ENCODE measurements at regions of chr3 and their contacts with region 1.

Region 1: GRCh38 chr3:170098753-170099152 is 61.0 kb downstream of the GPR160 start:
- DNase-seq: no peak
- ATAC-seq: no peak
- H3K4me3 ChIP-seq: no peak overlapping the region
- H3K4me3 Mint-ChIP-seq: no peak overlapping the region
- H3K27ac ChIP-seq: no peak overlapping the region
- H3K27ac Mint-ChIP-seq: peak overlapping the region; percentile 68
- H3K4me1 ChIP-seq: no peaks in the 10 kb centered on the region
- H3K4me1 Mint-ChIP-seq: peaks cover 17% of the 10 kb centered on the region
- H3K27me3 ChIP-seq: no peaks in the 10 kb centered on the region
- H3K27me3 Mint-ChIP-seq: no peaks in the 10 kb centered on the region
- CTCF ChIP-seq: no peak

Region 2: GRCh38 chr3:169980055-169980454 is 118.7 kb before region 1 on chr3:
- CTCF ChIA-PET with region 1: no interaction called
- POLR2A ChIA-PET with region 1: no interaction called
- intact Hi-C with region 1: loop called (anchors 5 kb)
- DNase-seq: no peak
- ATAC-seq: no peak
- H3K4me3 ChIP-seq: no peak overlapping the region
- H3K4me3 Mint-ChIP-seq: no peak overlapping the region
- H3K27ac ChIP-seq: no peak overlapping the region
- H3K27ac Mint-ChIP-seq: no peak overlapping the region
- H3K4me1 ChIP-seq: no peaks in the 10 kb centered on the region
- H3K4me1 Mint-ChIP-seq: peaks cover 8% of the 10 kb centered on the region
- H3K27me3 ChIP-seq: no peaks in the 10 kb centered on the region
- H3K27me3 Mint-ChIP-seq: no peaks in the 10 kb centered on the region
- CTCF ChIP-seq: no peak

Region 3: GRCh38 chr3:169986613-169987012 is 112.1 kb before region 1 on chr3:
- CTCF ChIA-PET with region 1: no interaction called
- POLR2A ChIA-PET with region 1: no interaction called
- intact Hi-C with region 1: loop called (anchors 5 kb)
- DNase-seq: no peak
- ATAC-seq: no peak
- H3K4me3 ChIP-seq: no peak overlapping the region
- H3K4me3 Mint-ChIP-seq: no peak overlapping the region
- H3K27ac ChIP-seq: no peak overlapping the region
- H3K27ac Mint-ChIP-seq: no peak overlapping the region
- H3K4me1 ChIP-seq: no peaks in the 10 kb centered on the region
- H3K4me1 Mint-ChIP-seq: no peaks in the 10 kb centered on the region
- H3K27me3 ChIP-seq: no peaks in the 10 kb centered on the region
- H3K27me3 Mint-ChIP-seq: no peaks in the 10 kb centered on the region
- CTCF ChIP-seq: no peak

Region 4: DNA sequence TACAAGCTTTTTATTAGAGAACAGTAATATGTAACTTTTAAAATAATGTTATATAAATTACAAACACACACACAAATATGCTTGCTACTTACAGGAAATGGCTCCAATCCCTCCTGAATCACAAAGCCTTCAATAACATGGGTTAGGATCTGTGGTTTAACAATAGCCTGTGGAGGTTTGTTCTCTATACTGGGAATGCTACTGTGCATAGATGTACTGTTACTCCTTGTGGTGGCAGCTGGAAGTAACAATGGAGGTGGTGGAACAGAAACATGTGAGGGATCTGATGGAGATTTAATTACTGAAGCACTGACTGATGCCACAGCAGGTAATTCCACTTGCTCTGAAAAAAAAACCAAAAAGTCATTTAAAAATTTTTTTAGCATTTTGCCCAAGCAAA is 18.4 kb after region 1 on chr3:
- CTCF ChIA-PET with region 1: no interaction called
- POLR2A ChIA-PET with region 1: interaction called, 3 read pairs
- intact Hi-C with region 1: loop called in 1 of 2 experiments (anchors 2 kb)
- DNase-seq: no peak
- ATAC-seq: no peak
- H3K4me3 ChIP-seq: no peak overlapping the region
- H3K4me3 Mint-ChIP-seq: no peak overlapping the region
- H3K27ac ChIP-seq: no peak overlapping the region
- H3K27ac Mint-ChIP-seq: no peak overlapping the region
- H3K4me1 ChIP-seq: no peaks in the 10 kb centered on the region
- H3K4me1 Mint-ChIP-seq: peaks cover 2% of the 10 kb centered on the region
- H3K27me3 ChIP-seq: no peaks in the 10 kb centered on the region
- H3K27me3 Mint-ChIP-seq: no peaks in the 10 kb centered on the region
- CTCF ChIP-seq: no peak

Measured in CD8-positive, alpha-beta T cell (primary cell).